ENCODE measurements at regions of chr16 and their contacts with region 1.

Region 1: DNA sequence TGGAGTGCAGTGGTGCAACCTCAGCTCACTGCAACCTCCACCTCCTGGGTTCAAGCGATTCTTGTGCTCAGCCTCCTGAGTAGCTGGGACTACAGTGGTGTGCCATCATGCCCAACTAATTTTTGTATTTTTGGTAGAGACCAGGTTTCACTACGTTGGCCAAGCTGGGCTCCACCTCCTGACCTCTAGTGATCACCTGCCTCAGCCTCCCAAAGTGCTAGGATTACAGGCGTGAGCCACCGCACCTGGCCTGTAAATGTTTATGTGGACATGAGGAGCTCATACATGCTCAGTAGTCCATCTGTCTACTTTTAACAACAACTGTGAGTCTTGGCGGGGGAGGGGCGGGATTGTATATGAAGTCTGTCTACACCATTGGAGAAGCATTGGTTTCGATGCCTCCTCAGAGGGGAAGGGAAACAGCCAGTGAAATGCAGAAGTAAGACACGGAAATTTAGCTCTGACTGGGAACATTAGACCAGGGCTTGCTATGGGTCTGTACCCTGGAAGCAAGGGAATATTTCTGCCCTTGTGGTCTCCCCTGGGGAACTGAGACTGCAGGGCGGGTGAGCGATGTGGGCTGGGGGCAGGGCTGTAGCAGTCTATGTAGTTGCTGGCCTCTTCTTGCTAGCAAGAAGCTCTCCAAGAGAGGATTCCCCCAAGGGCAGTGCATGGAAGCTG is 9.3 kb downstream of the NUBP1 start:
- DNase-seq: peak; percentile 55
- H3K4me3 ChIP-seq: no peak overlapping the region
- H3K27ac ChIP-seq: no peak overlapping the region
- H3K4me1 ChIP-seq: peaks cover 0 to 7% (median 0%) of the 10 kb centered on the region in 4 donors
- H3K27me3 ChIP-seq: no peaks in the 10 kb centered on the region
- CTCF ChIP-seq: no peak
- EP300 ChIP-seq: no peak
- POLR2A ChIP-seq: no peak

Region 2: GRCh38 chr16:10871149-10871991 is 118.4 kb after region 1 on chr16:
- in situ Hi-C with region 1: loop called in 1 of 4 experiments (anchors 25 kb)
- intact Hi-C with region 1: no loop called
- DNase-seq: peak; percentile 86
- H3K4me3 ChIP-seq: no peak overlapping the region
- H3K27ac ChIP-seq: peak overlapping the region; percentile 40 to 72 (median 56)
- H3K4me1 ChIP-seq: peaks cover 0 to 25% (median 19%) of the 10 kb centered on the region in 4 donors
- H3K27me3 ChIP-seq: no peaks in the 10 kb centered on the region
- CTCF ChIP-seq: no peak
- EP300 ChIP-seq: no peak
- POLR2A ChIP-seq: no peak